AG04450 (cell line): ENCODE measurements at regions of chr10 and their contacts with region 1.

Region 1: DNA sequence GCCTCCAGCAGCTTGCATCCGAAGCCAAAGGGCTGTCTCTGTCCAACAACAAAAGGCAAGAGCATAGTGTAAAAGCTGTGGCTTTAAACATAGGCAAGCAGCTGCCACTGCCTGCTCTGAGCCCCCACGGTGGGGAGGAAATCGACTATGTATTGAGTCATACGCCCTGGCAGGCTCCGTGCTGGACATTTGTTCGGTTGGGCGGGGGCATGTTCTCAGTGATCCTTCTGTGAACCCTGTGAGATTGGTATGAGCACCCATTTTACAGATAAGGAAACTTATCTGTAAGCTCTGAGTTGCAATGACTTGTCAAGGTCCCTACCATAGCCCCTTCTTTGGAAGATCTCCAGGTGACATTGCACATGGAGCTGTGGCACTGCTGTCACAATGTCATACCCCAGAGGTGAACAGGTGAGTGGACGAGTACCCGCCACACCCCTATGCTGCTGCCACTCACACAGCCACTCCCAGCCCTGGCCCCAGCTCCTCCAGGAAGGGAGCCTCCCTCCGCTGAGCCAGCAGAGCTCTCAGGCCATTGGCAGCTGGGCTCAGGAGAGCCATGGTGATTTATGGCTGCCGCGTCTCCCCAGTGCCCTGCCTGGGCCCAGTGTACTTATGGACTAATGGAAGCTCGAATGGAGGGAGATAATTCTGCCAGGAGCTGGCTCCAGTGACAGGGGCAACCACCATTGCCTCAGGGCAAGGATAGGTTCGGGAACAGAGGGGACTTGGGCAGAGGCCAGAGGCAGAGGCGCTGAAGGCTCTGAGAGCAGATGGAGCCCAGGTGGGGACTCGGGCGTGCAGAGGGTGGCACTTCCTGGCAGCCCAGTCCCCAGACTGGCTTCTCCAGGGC is 43.7 kb downstream of the UNC5B start:
- DNase-seq: peak; percentile 74
- H3K4me3 ChIP-seq: no peak overlapping the region
- H3K27ac ChIP-seq: peak overlapping the region; percentile 77
- H3K27me3 ChIP-seq: no peaks in the 10 kb centered on the region
- CTCF ChIP-seq: no peak

Region 2: GRCh38 chr10:71244431-71245419 is 11.3 kb before region 1 on chr10:
- CTCF ChIA-PET with region 1: no interaction called
- POLR2A ChIA-PET with region 1: interaction called, 15 read pairs
- DNase-seq: peak; percentile 84
- H3K4me3 ChIP-seq: peak overlapping the region; percentile 55
- H3K27ac ChIP-seq: peak overlapping the region; percentile 96
- H3K27me3 ChIP-seq: no peaks in the 10 kb centered on the region
- CTCF ChIP-seq: no peak